BJ (cell line): ENCODE measurements at regions of chr6 and their contacts with region 1.

Region 1: GRCh38 chr6:3456755-3457466 is at the start of gene SLC22A23:
- DNase-seq: no peak
- H3K4me3 ChIP-seq: peak within 1 kb of the TSS; percentile 48
- H3K27me3 ChIP-seq: peaks cover 23% of the 10 kb centered on the region
- CTCF ChIP-seq: 0 out of 2 replicates have a peak, but pooled peaks have one; percentile 11
- polyA plus RNA-seq, gene SLC22A23: 0.28 and 0.44 TPM in 2 replicates

Region 2: GRCh38 chr6:3442431-3443220 is 14.3 kb before region 1 on chr6:
- CTCF ChIA-PET with region 1: interaction called, 28 read pairs
- POLR2A ChIA-PET with region 1: no interaction called
- DNase-seq: no peak
- H3K4me3 ChIP-seq: no peak overlapping the region
- H3K27me3 ChIP-seq: peaks cover 11% of the 10 kb centered on the region
- CTCF ChIP-seq: no peak